Endothelial cell of umbilical vein (primary cell): ENCODE measurements at regions of chr5 and their contacts with region 1.

Region 1: DNA sequence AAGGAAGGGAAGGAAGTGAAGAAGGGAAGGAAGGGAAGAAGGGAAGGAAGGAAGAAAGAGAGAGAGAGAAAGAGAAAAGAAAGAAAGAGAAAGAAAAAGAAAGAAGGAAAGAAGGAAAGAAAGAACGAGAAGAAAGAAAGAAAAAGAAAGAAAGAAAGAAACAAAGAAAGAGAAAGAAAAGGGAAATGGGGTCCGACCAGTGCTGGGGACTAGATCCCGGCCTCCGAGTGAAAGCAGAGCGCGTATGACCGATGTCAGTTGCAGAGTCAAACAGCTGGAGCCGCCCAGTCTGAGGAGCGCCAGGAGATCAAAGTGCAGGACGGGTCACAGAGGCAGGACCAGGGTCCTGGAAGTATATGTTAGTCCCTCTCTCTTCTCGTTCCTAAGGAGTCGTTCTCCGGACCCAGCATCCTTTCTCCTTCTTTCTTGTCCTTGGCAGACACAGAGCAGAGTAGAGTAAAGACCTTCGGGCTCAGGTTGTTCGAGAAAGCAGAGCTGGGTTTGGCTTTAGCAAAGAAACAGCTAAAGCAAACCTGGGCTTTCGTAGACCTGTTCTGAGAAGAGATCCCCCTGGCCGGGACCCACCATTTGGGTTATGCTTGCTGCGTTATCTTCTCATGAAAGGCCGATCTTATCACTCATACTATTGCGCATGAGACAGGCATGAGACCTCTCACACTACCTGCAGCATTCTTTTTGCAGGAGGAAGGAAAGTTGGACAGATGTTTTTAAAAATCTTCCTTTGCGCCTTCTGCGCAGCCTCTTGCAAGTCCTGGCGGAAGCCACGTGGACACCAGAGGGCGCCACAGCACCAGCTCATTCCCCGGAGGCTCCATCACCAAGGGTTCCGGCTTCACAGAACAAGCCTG is 305.2 kb upstream of the MSX2 start:
- DNase-seq: peak; percentile 43
- H3K4me3 ChIP-seq: no peak overlapping the region
- H3K27ac ChIP-seq: no peak overlapping the region
- H3K4me1 ChIP-seq: no peaks in the 10 kb centered on the region
- H3K27me3 ChIP-seq: no peaks in the 10 kb centered on the region
- CTCF ChIP-seq: peak; percentile 66 to 80
- POLR2A ChIP-seq: no peak

Region 2: GRCh38 chr5:173954671-173955521 is 464.3 kb before region 1 on chr5:
- CTCF ChIA-PET with region 1: no interaction called
- POLR2A ChIA-PET with region 1: no interaction called
- dilution Hi-C with region 1: no loop called
- intact Hi-C with region 1: no loop called
- DNase-seq: no peak
- H3K4me3 ChIP-seq: no peak overlapping the region
- H3K27ac ChIP-seq: no peak overlapping the region
- H3K4me1 ChIP-seq: no peaks in the 10 kb centered on the region
- H3K27me3 ChIP-seq: no peaks in the 10 kb centered on the region
- CTCF ChIP-seq: no peak
- POLR2A ChIP-seq: no peak

Region 3: DNA sequence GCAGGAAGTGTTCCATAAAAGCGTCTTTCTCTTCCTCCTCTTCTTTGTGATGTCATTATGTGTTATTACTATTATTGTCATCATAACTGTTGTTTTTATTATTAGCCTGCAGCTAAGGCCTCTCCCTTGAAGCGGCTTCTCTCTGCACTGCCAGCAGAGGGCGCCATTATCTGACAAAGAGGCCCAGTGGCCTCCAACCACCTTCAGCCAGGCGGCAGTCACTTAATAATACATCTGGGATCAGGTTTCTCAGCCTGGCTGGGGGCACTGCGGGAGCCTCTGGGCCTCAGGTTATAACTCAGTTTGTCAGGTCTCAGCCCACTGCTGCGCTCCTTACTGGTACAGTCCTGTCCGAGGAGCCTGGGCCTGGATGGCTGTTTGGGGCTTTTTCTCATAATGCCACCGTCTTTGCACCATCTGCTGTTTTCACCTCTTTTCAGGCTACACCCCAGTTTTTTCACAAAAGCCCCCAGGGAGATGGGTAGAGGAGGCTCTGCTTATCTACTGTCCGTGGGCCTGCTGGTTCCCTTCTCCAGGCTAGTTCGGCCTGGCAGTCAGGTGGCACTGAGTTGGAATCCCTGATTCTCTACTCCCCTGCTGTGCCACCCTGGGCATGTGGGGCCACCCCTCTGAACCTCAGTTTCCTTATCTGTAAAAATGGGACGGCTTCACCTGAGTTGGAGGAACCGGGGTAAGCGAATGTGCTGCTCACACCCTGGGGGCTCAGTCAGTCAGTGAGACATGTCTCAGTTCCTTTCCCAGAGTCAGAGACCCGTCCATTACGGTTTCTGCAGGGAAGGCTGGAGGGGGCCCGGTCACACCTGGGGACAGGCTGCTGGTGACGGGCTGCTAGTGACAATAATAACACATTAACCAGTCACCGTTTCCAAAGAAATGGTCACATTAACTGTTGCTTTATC is 91.6 kb before region 1 on chr5:
- CTCF ChIA-PET with region 1: no interaction called
- POLR2A ChIA-PET with region 1: no interaction called
- dilution Hi-C with region 1: no loop called
- intact Hi-C with region 1: loop called (anchors 1 kb)
- DNase-seq: no peak
- H3K4me3 ChIP-seq: no peak overlapping the region
- H3K27ac ChIP-seq: no peak overlapping the region
- H3K4me1 ChIP-seq: no peaks in the 10 kb centered on the region
- H3K27me3 ChIP-seq: no peaks in the 10 kb centered on the region
- CTCF ChIP-seq: peak; percentile 45 to 65
- POLR2A ChIP-seq: no peak

Region 4: GRCh38 chr5:174453696-174454095 is 34.5 kb after region 1 on chr5:
- CTCF ChIA-PET with region 1: no interaction called
- POLR2A ChIA-PET with region 1: no interaction called
- dilution Hi-C with region 1: no loop called
- intact Hi-C with region 1: no loop called
- DNase-seq: no peak
- H3K4me3 ChIP-seq: no peak overlapping the region
- H3K27ac ChIP-seq: no peak overlapping the region
- H3K4me1 ChIP-seq: no peaks in the 10 kb centered on the region
- H3K27me3 ChIP-seq: no peaks in the 10 kb centered on the region
- CTCF ChIP-seq: no peak
- POLR2A ChIP-seq: no peak

Region 5: GRCh38 chr5:174493530-174493929 is 74.4 kb after region 1 on chr5:
- CTCF ChIA-PET with region 1: no interaction called
- POLR2A ChIA-PET with region 1: no interaction called
- dilution Hi-C with region 1: no loop called
- intact Hi-C with region 1: no loop called
- DNase-seq: no peak
- H3K4me3 ChIP-seq: no peak overlapping the region
- H3K27ac ChIP-seq: no peak overlapping the region
- H3K4me1 ChIP-seq: no peaks in the 10 kb centered on the region
- H3K27me3 ChIP-seq: no peaks in the 10 kb centered on the region
- CTCF ChIP-seq: no peak
- POLR2A ChIP-seq: no peak

Region 6: GRCh38 chr5:174735498-174736330 is 316.6 kb after region 1 on chr5:
- CTCF ChIA-PET with region 1: no interaction called
- POLR2A ChIA-PET with region 1: no interaction called
- dilution Hi-C with region 1: no loop called
- intact Hi-C with region 1: loop called (anchors 1 kb)
- DNase-seq: no peak
- H3K4me3 ChIP-seq: no peak overlapping the region
- H3K27ac ChIP-seq: no peak overlapping the region
- H3K4me1 ChIP-seq: no peaks in the 10 kb centered on the region
- H3K27me3 ChIP-seq: peaks cover 20 to 47% of the 10 kb centered on the region in 2 experiments
- CTCF ChIP-seq: no peak
- POLR2A ChIP-seq: no peak

Region 7: DNA sequence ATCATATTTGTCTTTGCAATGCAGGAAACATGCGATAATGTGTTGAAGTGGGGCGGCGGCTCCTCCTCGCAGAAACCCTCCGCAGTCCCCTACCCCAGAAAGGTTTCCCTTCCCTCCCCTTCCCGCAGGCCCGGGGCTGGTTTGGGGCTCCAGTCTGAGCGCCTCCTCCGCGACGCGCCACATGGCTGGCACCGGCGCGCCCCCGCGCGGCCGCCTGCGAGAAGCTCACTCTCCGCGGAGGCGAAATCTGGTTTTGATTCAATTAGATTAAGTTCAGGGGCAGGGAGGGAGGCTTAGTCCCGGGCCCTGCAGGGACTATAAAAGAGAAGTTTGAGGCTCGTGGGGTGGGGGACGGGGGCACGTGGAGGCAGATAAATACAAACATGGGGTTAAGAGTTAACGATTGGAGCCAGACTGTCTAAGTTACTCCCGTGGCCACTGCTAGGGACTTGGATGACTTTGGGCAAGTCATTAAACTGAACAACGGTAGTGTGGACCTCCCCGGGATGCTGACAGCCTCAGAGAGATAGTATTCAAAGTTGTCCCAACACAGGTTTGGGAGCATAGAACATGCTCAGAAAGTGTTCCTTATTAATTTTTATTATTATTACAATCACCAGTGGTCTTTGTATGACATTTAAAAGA is 374.6 kb after region 1 on chr5:
- CTCF ChIA-PET with region 1: interaction called, 72 read pairs
- POLR2A ChIA-PET with region 1: no interaction called
- dilution Hi-C with region 1: no loop called
- intact Hi-C with region 1: no loop called
- DNase-seq: peak; percentile 4
- H3K4me3 ChIP-seq: no peak overlapping the region
- H3K27ac ChIP-seq: no peak overlapping the region
- H3K4me1 ChIP-seq: no peaks in the 10 kb centered on the region
- H3K27me3 ChIP-seq: no peaks in the 10 kb centered on the region
- CTCF ChIP-seq: peak; percentile 74 to 78
- POLR2A ChIP-seq: no peak

Region 8: GRCh38 chr5:174935854-174936474 is 516.8 kb after region 1 on chr5:
- CTCF ChIA-PET with region 1: interaction called, 3 read pairs
- POLR2A ChIA-PET with region 1: no interaction called
- dilution Hi-C with region 1: no loop called
- intact Hi-C with region 1: loop called (anchors 1 kb)
- DNase-seq: peak; percentile 14
- H3K4me3 ChIP-seq: no peak overlapping the region
- H3K27ac ChIP-seq: no peak overlapping the region
- H3K4me1 ChIP-seq: no peaks in the 10 kb centered on the region
- H3K27me3 ChIP-seq: no peaks in the 10 kb centered on the region
- CTCF ChIP-seq: peak; percentile 78 to 86
- POLR2A ChIP-seq: no peak